Breast epithelium (tissue), 4 donors: ENCODE measurements at regions of chr5 and their contacts with region 1.

Region 1: GRCh38 chr5:178542455-178542854 is 47.7 kb downstream of the COL23A1 start:
- DNase-seq: no peak
- H3K4me3 ChIP-seq: no peak overlapping the region
- H3K27ac ChIP-seq: no peak overlapping the region
- H3K4me1 ChIP-seq: no peaks in the 10 kb centered on the region
- H3K27me3 ChIP-seq: no peaks in the 10 kb centered on the region
- CTCF ChIP-seq: no peak
- POLR2A ChIP-seq: no peak

Region 2: GRCh38 chr5:178635146-178635545 is 92.7 kb after region 1 on chr5:
- intact Hi-C with region 1: loop called (anchors 5 kb)
- DNase-seq: peak in 1 of 2 donors; percentile 40
- H3K4me3 ChIP-seq: no peak overlapping the region
- H3K27ac ChIP-seq: no peak overlapping the region
- H3K4me1 ChIP-seq: no peaks in the 10 kb centered on the region
- H3K27me3 ChIP-seq: no peaks in the 10 kb centered on the region
- CTCF ChIP-seq: no peak
- POLR2A ChIP-seq: no peak

Region 3: GRCh38 chr5:179265514-179266290 is 723.2 kb after region 1 on chr5:
- intact Hi-C with region 1: no loop called
- DNase-seq: peak; percentile 72 to 80
- H3K4me3 ChIP-seq: peak overlapping the region in 1 of 3 donors; percentile 40
- H3K27ac ChIP-seq: peak overlapping the region; percentile 80 to 88
- H3K4me1 ChIP-seq: peaks cover 0 to 23% of the 10 kb centered on the region in 2 donors
- H3K27me3 ChIP-seq: peaks cover 0 to 9% of the 10 kb centered on the region in 2 donors
- CTCF ChIP-seq: no peak
- POLR2A ChIP-seq: no peak